Dorsolateral prefrontal cortex (tissue), 120 donors: ENCODE measurements at regions of chr3 and their contacts with region 1.

Region 1: DNA sequence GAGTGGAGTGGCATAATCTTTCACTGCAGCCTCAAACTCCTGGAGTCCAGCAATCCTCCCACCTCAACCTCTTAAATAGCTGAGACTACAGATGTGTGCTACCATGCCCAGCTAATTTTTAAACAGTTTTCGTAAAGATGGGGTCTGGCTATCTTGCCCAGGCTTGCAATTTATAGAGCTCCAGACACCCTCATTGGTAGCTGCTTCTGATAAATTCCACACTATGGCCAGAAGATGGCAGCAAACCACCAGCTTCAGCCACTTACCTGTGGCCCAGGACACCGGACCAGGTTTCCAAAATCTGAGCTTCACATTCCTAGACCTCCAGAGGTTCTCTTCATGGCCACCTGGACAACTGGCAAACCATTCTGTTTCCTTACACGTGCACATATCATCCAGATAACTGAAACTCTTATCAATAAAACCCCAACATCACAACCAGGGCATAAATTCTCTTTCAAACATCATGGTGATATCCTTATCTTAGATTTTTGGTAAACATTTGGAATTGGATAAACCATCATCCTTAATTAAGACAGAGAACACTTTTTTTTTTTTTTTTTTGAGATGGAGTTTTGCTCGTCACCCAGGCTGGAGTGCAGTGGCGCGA is 28.9 kb downstream of the FBXW12 start:
- DNase-seq: peak in 9 of 10 donors; percentile 45 to 72 (median 53)
- H3K4me3 ChIP-seq: no peak overlapping the region
- H3K27ac ChIP-seq: peak overlapping the region in 11 of 59 donors; percentile 47 to 78 (median 75)
- H3K27me3 ChIP-seq: no peaks in the 10 kb centered on the region
- CTCF ChIP-seq: peak; percentile 59 to 94 (median 85)

Region 2: DNA sequence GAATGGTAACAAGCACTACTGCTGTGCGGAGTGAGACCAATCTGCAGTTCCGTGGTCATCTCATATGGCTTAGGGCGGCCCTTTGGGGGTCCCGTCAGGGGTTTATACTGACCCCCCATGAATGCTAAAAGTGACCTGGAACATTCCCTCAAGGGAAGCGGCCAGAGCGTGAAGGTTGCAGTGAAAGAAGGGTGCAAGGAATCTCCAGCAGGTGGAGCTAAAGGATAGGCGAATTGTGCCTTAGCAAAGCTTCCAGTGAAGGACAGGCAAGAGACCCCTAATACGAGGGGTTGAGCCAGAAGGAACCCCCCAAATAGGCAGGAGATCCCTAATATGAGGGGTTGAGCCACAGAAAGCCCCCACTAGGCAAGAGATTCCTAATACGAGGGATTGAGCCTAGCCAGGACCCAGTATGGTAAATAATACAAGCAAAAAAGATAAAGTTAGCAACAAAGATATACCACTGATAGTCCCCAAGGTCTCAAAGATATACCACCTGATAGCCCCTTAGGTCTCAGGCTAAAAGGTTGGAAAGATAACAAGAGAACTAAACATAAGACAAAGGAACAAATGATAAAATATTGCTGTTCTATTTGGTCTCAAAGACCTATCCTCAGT is 127.2 kb before region 1 on chr3:
- intact Hi-C with region 1: loop called (anchors 5 kb)
- DNase-seq: peak in 6 of 10 donors; percentile 21 to 59 (median 50)
- H3K4me3 ChIP-seq: no peak overlapping the region
- H3K27ac ChIP-seq: no peak overlapping the region
- H3K27me3 ChIP-seq: no peaks in the 10 kb centered on the region
- CTCF ChIP-seq: peak; percentile 44 to 87 (median 75)

Region 3: GRCh38 chr3:48338635-48339034 is 62.3 kb before region 1 on chr3:
- intact Hi-C with region 1: no loop called
- DNase-seq: no peak
- H3K4me3 ChIP-seq: no peak overlapping the region
- H3K27ac ChIP-seq: no peak overlapping the region
- H3K27me3 ChIP-seq: no peaks in the 10 kb centered on the region
- CTCF ChIP-seq: no peak

Region 4: GRCh38 chr3:48535578-48535977 is 134.6 kb after region 1 on chr3:
- intact Hi-C with region 1: loop called in 1 of 2 experiments (anchors 5 kb)
- DNase-seq: no peak
- H3K4me3 ChIP-seq: no peak overlapping the region
- H3K27ac ChIP-seq: peak overlapping the region in 2 of 59 donors; percentile 6 to 11
- H3K27me3 ChIP-seq: no peaks in the 10 kb centered on the region
- CTCF ChIP-seq: no peak